Panc1 (cell line): ENCODE measurements at regions of chr14 and their contacts with region 1.

Region 1: DNA sequence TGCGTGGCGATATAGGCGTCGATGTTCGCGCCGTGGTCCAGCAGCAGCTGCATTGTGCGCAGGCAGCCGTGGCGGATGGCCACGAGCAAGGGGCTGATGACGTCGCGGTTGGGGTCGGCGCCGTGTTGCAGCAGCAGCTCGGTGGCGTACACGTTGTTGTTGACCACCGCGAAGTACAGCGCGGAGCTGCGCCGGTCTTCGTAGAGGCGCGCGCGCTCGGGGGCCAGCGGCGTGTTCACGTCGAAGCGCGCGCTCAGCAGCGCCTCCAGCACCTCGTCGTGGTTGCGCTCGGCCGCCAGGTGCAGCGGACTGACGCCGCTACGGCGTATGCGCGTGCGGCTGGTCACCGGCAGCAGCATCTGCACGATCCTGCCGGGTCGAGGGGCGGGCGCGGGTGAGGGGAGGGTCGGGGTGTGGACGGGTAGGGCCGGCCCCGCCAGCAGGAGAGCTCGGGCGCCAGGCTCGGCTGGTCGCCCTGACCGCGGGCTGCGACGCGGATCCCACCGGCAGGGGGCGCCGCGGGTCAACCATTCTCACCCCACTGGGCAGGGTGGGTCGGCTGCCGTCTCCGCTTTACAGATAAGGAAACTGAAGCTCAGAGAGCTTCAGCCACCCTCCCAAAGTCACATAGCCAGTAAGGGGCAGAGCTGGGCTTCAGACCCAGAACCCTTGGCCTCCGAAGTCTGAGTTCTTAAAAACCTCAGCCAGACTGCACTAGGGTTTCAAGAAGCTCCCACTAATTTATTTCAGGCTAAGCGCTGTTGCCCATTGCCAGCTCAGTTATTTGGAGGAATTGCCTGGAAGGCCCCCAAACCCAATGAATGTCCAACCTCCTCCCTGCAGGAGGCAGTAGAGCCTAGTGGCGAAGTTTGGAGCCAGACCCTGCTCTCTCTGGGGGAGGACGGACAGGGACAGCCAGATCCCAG is 12.4 kb downstream of the FAM181A start:
- DNase-seq: no peak
- ATAC-seq: peak; percentile 91
- H3K4me3 ChIP-seq: peak overlapping the region; percentile 20 to 25; a peak in 3 of 4 replicates
- H3K27ac ChIP-seq: 0 out of 2 replicates have a peak overlapping the region, but pooled peaks have one; percentile 17
- H3K4me1 ChIP-seq: peaks cover 10% of the 10 kb centered on the region
- H3K27me3 ChIP-seq: no peaks in the 10 kb centered on the region
- CTCF ChIP-seq: peak; percentile 89

Region 2: DNA sequence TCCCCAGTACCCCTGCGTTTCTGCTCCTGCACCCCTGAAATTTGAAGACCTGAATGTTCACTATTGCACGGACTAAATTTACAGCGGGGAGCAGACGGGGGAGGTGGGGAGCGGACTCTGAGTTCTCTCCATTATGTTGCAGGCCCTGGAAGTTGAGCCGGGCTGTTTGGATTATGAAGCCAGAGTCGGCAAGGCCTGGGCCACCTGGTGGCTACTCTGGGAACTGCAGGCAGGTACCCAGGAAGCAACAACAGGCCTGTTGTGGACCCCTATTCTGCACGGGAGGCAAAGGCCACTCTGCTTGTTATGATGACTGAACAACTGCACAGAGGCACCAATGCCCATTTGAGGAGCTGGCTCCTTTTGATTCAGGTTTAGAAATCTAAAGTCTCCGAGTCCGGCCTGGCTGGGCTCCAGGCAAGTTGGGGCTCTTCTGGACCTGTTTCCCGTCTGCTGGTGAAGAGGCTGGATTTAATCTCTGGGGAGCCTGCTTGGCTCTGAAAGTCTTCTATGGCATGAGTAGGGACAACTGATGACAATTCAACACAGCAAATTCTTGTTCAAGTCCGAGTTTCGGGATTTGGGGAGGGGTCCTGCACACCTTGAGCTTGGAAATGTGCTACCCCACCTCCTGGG is 46.5 kb before region 1 on chr14:
- CTCF ChIA-PET with region 1: no interaction called
- POLR2A ChIA-PET with region 1: no interaction called
- in situ Hi-C with region 1: no loop called
- intact Hi-C with region 1: no loop called
- DNase-seq: peak; percentile 41
- ATAC-seq: peak; percentile 87
- H3K4me3 ChIP-seq: no peak overlapping the region
- H3K27ac ChIP-seq: no peak overlapping the region
- H3K4me1 ChIP-seq: no peaks in the 10 kb centered on the region
- H3K27me3 ChIP-seq: no peaks in the 10 kb centered on the region
- CTCF ChIP-seq: peak; percentile 91

Region 3: DNA sequence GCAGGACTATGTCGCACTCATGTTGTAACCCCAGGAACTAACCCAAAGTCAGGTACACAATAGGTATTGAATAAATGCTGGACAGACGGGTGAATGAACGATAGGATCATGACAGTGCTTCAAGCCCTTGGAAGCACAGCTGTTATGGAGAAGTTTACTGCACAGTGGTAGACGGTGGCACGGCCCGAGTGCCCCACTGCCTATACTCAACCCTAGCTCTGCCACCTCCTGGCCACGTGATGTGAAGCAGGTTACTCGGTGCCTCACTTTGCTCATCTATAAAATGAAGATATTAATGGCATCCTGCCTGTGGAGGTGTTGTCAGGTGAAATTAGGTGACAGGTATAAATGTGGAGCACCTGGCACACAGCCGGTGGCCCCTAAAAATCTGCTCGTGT is 31.0 kb after region 1 on chr14:
- CTCF ChIA-PET with region 1: interaction called, 11 read pairs
- POLR2A ChIA-PET with region 1: no interaction called
- in situ Hi-C with region 1: no loop called
- intact Hi-C with region 1: no loop called
- DNase-seq: no peak
- ATAC-seq: peak; percentile 88
- H3K4me3 ChIP-seq: peak overlapping the region in 1 of 2 experiments; percentile 22; a peak in 2 of 4 replicates
- H3K27ac ChIP-seq: no peak overlapping the region
- H3K4me1 ChIP-seq: peaks cover 2% of the 10 kb centered on the region; the same call in 1 of the 2 replicates
- H3K27me3 ChIP-seq: no peaks in the 10 kb centered on the region
- CTCF ChIP-seq: peak; percentile 59

Region 4: DNA sequence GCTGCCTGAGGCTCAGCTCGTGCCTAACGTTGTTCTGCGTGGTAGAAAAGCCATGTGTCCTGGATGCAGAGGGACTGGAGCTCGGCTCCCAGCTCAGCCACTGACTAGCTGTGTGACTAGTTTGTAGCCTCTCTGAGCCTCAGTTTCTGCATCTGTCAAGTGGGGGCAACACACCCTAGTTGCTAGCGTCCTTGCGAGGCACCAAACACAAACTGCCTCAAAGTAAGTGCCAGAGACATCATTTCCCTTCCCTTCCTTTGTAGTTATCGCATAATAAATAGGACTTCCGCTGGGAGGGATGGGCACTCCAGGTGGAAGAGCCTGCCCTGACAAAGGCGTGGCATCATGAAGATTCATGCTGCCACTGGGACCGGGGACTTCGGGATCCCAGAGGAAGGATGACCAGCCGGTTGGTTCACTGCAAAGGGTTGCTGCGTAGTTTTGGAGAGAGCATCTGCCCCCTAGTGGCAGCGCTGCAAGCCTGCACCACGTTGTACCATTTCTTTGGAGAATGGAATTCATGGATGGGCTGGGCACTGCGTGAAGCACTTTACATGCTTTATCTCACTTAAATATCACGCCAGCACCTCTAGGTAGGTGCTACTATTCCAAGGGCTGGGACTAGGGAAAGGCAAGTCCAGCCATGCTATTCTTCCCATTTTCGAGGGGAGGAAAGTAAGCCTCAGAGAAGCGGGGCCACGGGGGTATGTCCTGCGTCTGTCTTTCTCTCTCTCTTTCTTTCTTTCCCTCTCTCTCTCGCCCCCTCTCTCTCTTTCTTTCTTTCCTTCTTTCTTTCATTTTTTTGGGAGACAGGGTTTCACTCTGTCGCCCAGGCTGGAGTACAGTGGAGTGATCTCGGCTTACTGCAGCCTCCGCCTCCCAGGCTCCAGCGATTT is 62.2 kb after region 1 on chr14:
- CTCF ChIA-PET with region 1: interaction called, 11 read pairs
- POLR2A ChIA-PET with region 1: no interaction called
- in situ Hi-C with region 1: no loop called
- intact Hi-C with region 1: loop called (anchors 2 kb)
- DNase-seq: peak; percentile 61
- ATAC-seq: peak; percentile 88
- H3K4me3 ChIP-seq: no peak overlapping the region
- H3K27ac ChIP-seq: no peak overlapping the region
- H3K4me1 ChIP-seq: no peaks in the 10 kb centered on the region
- H3K27me3 ChIP-seq: no peaks in the 10 kb centered on the region
- CTCF ChIP-seq: peak; percentile 93